Head of caudate nucleus (tissue), 42 donors: ENCODE measurements at regions of chr9 and their contacts with region 1.

Region 1: GRCh38 chr9:76905791-76906650 is at the start of gene PRUNE2:
- DNase-seq: peak; percentile 48 to 91 (median 78)

Region 2: DNA sequence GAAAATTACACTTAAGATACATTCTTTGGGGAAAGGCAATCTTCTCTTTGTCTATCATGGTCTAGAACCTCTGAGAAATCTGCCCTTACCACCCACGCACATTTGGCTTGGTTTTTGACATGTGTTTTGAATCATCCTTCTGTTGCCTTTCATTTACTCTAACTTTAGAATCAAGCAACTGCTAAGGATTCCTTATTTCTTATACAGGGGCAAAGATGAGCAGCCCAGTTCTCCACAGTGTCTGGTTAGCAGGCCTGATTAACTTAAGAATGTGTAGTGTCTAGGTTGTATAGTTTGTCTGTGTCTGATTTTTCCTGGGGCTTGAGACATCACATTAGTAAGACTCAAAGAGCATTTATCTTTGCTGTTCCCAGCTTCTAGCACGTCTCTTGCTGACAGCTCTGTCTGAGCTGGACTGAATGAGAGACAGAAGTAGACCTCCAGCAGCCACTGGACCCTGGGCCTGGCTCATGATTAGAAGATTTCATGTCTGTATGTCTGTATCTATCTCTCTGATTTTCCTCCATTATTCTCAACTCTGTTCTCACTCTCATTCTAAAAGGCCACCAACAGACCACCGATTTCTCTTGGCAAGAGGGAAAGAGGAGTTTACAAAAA is 173.6 kb before region 1 on chr9:
- intact Hi-C with region 1: no loop called
- DNase-seq: peak in 1 of 42 donors; percentile 7

Region 3: GRCh38 chr9:76818271-76818670 is 87.8 kb before region 1 on chr9:
- intact Hi-C with region 1: loop called (anchors 5 kb)
- DNase-seq: peak in 41 of 42 donors; percentile 14 to 94 (median 61)

Region 4: GRCh38 chr9:76835571-76836283 is 70.3 kb before region 1 on chr9:
- intact Hi-C with region 1: no loop called
- DNase-seq: peak in 2 of 42 donors; percentile 11 to 49

Region 5: DNA sequence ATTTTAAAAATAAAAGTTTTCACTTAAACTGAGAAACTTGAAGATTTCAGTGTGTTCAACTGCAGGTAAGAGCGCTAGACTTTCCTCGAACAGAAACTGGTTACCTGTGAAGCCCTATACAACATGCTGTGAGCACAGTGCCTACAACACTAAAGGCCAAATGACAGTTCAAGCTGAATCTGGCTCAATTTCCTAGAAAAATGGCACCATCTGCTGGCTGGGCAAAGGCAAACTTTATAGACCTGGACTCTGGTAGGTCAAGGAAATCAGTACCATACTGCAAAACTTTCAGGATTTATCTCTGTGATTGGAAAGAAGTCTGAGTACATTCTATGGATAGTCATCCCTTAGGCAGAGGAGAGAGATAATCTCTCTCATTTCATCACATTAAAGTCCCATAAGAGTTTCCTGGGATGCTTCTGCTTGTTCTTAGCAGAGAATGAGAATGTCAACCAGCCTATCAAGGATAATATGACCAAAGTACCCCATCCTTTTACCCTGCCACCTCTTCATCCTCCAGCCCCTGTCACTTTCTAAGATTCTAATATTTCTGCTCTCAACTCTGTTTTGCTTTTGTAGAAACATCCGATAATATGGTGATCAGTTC is 81.7 kb after region 1 on chr9:
- intact Hi-C with region 1: loop called (anchors 5 kb)
- DNase-seq: peak in 40 of 42 donors; percentile 27 to 86 (median 65)